Activated CD4-positive, alpha-beta T cell treated with anti-CD3 and anti-CD28 coated beads for 36 hours (primary cell): ENCODE measurements at regions of chr6 and their contacts with region 1.

Region 1: DNA sequence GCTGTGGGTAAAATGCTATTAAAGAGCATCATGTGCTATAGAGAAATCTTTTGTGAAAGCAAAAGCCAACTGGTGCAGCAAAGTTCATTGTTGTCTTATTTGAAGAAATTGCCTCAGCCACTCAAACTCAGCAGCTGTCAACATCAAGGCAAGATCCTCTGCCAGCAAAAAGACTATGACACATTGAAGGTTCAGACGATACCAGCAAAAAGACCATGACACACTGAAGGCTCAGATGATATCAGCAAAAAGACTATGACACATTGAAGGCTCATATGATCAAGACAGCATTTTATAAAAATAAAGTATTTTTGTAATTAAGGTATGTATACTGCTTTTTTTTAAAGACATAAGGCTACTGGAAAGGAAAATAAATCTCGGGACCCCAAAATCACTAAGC is 118.4 kb upstream of the RUNX2 start:
- DNase-seq: peak; percentile 8
- ATAC-seq: peak; percentile 83
- H3K4me3 Mint-ChIP-seq: no peak overlapping the region
- H3K27ac Mint-ChIP-seq: no peak overlapping the region
- H3K4me1 Mint-ChIP-seq: peaks cover 29% of the 10 kb centered on the region
- H3K27me3 Mint-ChIP-seq: no peaks in the 10 kb centered on the region

Region 2: GRCh38 chr6:45278367-45278766 is 68.6 kb after region 1 on chr6:
- CTCF ChIA-PET with region 1: no interaction called
- POLR2A ChIA-PET with region 1: no interaction called
- intact Hi-C with region 1: loop called in 1 of 2 experiments (anchors 5 kb)
- DNase-seq: no peak
- ATAC-seq: no peak
- H3K4me3 Mint-ChIP-seq: no peak overlapping the region
- H3K27ac Mint-ChIP-seq: no peak overlapping the region
- H3K4me1 Mint-ChIP-seq: no peaks in the 10 kb centered on the region
- H3K27me3 Mint-ChIP-seq: no peaks in the 10 kb centered on the region

Region 3: GRCh38 chr6:45436544-45437438 is 227.0 kb after region 1 on chr6:
- CTCF ChIA-PET with region 1: no interaction called
- POLR2A ChIA-PET with region 1: no interaction called
- intact Hi-C with region 1: no loop called
- DNase-seq: peak; percentile 69
- ATAC-seq: peak; percentile 92
- H3K4me3 Mint-ChIP-seq: peak overlapping the region; percentile 59
- H3K27ac Mint-ChIP-seq: peak overlapping the region; percentile 92
- H3K4me1 Mint-ChIP-seq: peaks cover 74% of the 10 kb centered on the region
- H3K27me3 Mint-ChIP-seq: peaks cover 2% of the 10 kb centered on the region

Region 4: GRCh38 chr6:45983062-45983616 is 773.4 kb after region 1 on chr6:
- CTCF ChIA-PET with region 1: no interaction called
- POLR2A ChIA-PET with region 1: no interaction called
- intact Hi-C with region 1: no loop called
- DNase-seq: no peak
- ATAC-seq: no peak
- H3K4me3 Mint-ChIP-seq: no peak overlapping the region
- H3K27ac Mint-ChIP-seq: no peak overlapping the region
- H3K4me1 Mint-ChIP-seq: no peaks in the 10 kb centered on the region
- H3K27me3 Mint-ChIP-seq: no peaks in the 10 kb centered on the region